SK-N-SH (cell line): ENCODE measurements at regions of chr16 and their contacts with region 1.

Region 1: GRCh38 chr16:50368410-50369132 is at the start of gene BRD7:
- DNase-seq: peak; percentile 97
- H3K4me3 ChIP-seq: peak within 1 kb of the TSS; percentile 79 to 91
- H3K27ac ChIP-seq: peak within 1 kb of the TSS; percentile 39 to 72; a peak in 3 of 4 replicates
- H3K4me1 ChIP-seq: peaks cover 0 to 28% of the 10 kb centered on the region in 2 experiments; a peak in 2 of 4 replicates
- H3K27me3 ChIP-seq: no peaks in the 10 kb centered on the region
- CTCF ChIP-seq: no peak
- EP300 ChIP-seq: no peak
- RAD21 ChIP-seq: no peak
- polyA plus RNA-seq, gene BRD7: 31.6 and 32.9 TPM in 2 replicates

Region 2: DNA sequence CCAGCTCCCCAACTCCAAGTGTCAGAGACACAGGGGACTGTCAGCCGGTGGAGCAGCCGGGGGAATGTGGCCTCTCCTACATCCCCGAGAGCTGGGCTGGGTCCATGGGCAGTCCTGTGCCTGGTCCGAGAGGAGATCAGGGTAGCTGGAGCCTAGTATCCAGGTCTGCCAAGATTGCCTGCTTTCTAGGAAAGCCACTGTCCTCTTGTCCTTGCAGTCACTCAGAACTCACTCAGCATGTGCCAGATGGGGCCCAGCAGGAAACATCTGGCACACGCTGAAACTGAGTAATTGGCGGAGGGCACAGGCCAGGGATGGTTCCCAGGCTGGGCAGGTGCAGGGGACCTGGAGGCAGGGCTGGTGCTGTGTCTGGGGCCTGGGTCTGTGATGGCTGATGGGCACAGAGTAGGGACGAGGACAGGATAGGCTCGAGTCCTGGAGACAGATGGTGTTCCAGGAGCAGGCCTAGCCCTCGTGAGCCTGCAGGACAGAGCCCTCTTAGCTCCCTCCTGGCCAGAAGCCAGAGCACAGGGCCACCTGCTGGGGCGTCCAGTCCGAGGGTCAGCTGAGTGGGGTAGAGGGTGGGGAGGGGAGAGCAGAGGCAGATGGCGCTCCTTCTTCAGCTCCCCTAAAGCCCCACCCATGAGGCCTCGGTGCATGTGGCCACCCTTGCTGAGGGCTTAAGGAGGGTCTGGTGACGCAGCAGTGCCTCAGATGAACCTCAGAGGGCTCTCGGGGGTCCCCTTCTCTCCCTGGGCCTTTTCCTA is 71.1 kb before region 1 on chr16:
- CTCF ChIA-PET with region 1: no interaction called
- POLR2A ChIA-PET with region 1: no interaction called
- DNase-seq: peak; percentile 89
- H3K4me3 ChIP-seq: no peak overlapping the region
- H3K27ac ChIP-seq: peak overlapping the region in 1 of 2 experiments; percentile 92; a peak in 2 of 4 replicates
- H3K4me1 ChIP-seq: peaks cover 0 to 21% of the 10 kb centered on the region in 2 experiments; a peak in 1 of 4 replicates
- H3K27me3 ChIP-seq: no peaks in the 10 kb centered on the region
- CTCF ChIP-seq: no peak
- EP300 ChIP-seq: peak in 1 of 2 experiments; percentile 77; a peak in 2 of 4 replicates
- RAD21 ChIP-seq: 0 out of 2 replicates have a peak, but pooled peaks have one; percentile 30

Region 3: DNA sequence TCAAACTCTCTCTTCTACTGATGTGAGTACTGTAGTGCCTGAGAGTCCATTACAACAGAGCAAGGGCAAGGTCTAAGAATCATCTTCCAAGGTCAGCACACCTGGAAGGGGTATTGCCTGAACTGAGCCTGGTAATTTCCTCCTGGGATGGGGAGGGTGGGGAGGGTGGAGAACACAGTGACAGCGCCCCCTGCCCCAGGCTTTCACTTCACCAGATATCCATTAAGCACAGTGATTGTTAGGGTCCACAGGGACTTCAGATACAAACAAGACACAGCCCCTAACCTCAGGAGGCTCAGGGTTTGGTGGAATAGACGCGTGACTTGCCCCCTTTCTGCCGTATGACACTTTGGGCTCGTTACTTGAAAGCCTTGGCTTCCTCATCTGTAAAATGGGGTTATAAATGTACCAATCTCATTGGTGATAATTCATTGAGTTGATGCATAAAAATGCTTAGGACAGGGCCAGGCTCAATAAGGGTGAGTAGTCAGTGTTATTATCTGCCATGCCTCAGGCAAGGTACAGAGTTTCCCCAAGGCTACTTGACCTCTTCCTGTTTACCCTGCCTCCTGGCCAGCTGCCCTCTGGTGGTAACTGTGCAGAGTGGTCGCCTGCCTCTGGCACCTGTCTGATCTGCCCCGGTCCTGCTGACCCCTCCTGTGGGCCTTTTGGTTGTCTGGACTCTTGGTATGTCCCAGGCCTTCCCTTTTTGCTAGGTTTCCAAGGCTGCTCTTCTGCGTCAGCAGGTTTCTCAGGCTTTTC is 13.3 kb after region 1 on chr16:
- CTCF ChIA-PET with region 1: interaction called, 24 read pairs
- POLR2A ChIA-PET with region 1: no interaction called
- DNase-seq: no peak
- H3K4me3 ChIP-seq: no peak overlapping the region
- H3K27ac ChIP-seq: no peak overlapping the region
- H3K4me1 ChIP-seq: peaks cover 0 to 11% of the 10 kb centered on the region in 2 experiments; a peak in 1 of 4 replicates
- H3K27me3 ChIP-seq: peaks cover 3% of the 10 kb centered on the region; the same call in 1 of the 2 replicates
- CTCF ChIP-seq: peak; percentile 12; the same call in 1 of the 2 replicates
- EP300 ChIP-seq: no peak
- RAD21 ChIP-seq: no peak

Region 4: GRCh38 chr16:50509521-50510341 is 141.2 kb after region 1 on chr16:
- CTCF ChIA-PET with region 1: interaction called, 29 read pairs
- POLR2A ChIA-PET with region 1: no interaction called
- DNase-seq: peak; percentile 47
- H3K4me3 ChIP-seq: peak overlapping the region in 1 of 2 experiments; percentile 9; a peak in 1 of 4 replicates
- H3K27ac ChIP-seq: no peak overlapping the region
- H3K4me1 ChIP-seq: peaks cover 0 to 5% of the 10 kb centered on the region in 2 experiments; a peak in 1 of 4 replicates
- H3K27me3 ChIP-seq: no peaks in the 10 kb centered on the region
- CTCF ChIP-seq: peak; percentile 66
- EP300 ChIP-seq: no peak
- RAD21 ChIP-seq: peak; percentile 70

Region 5: DNA sequence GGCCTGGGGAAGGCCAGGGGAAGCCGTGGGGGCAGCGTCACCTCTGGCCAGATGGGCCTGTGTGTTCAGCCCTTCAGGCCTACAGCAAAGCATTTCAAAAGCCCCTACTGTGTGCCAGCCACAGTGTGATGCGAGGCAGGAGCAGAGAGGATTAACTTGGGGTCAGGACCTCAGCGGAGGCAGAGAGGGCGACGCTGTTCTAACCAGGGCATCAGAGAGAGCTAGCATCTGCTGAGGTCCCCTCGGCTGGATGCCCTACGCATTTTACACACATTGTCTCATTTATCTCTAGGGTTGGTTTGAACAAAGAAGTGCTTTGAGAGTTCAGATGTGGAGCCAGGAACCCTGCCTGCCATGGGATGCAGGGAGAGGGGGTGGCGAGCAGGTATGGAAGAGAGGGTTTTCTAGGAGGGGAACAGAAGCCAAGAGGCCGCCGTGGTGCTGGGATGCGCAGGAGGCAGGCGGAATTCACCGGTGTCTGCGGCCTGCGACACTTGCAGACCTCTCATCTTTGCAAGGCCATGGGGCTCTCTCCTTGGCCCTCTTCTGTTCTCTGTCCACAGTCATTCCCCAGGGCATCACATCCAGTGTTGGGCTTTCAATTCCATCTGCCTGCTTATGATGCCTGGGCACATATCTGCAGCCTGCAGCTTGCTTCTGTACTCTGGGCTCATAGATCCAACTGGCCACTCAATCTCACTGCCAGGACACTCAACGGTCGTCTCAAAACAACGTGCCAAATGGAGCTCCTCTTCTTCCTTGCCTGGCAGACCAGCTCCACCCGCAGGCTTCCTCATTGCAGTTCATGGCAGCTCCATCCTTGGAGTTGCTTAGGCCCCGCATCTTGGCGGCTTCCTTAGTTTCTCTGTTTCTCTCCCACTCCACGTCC is 171.5 kb after region 1 on chr16:
- CTCF ChIA-PET with region 1: interaction called, 12 read pairs
- POLR2A ChIA-PET with region 1: no interaction called
- DNase-seq: no peak
- H3K4me3 ChIP-seq: no peak overlapping the region
- H3K27ac ChIP-seq: no peak overlapping the region
- H3K4me1 ChIP-seq: peaks cover 0 to 10% of the 10 kb centered on the region in 2 experiments; a peak in 1 of 4 replicates
- H3K27me3 ChIP-seq: peaks cover 7% of the 10 kb centered on the region; the same call in 1 of the 2 replicates
- CTCF ChIP-seq: no peak
- EP300 ChIP-seq: no peak
- RAD21 ChIP-seq: peak; percentile 44